Ascending aorta (tissue), 2 donors: ENCODE measurements at regions of chr20 and their contacts with region 1.

Region 1: DNA sequence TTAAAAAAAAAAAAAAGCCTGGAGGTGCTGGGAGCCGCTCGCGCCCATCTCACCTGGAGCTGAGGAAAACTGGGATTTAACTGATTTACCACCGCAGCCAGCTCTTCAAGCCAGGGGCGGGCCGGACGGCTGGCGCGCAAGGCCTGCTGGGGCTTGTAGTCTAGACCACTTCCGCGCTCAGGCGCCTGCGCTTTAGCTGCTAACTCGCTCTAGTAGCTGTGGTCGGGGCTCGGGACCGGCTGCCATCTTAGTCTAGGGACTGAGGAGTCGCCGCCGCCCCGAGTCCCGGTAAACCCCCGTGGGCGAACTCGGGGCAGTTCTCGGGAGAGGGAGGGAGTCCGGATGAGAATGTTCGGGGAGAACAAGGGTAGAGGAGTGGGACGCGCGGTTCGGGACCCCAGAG is at the start of gene ITCH:
- DNase-seq: peak; percentile 81 to 97
- H3K4me3 ChIP-seq: peak within 1 kb of the TSS; percentile 79 to 83
- H3K27ac ChIP-seq: peak within 1 kb of the TSS; percentile 92 to 94
- H3K4me1 ChIP-seq: peaks cover 6 to 38% of the 10 kb centered on the region in 2 donors
- H3K27me3 ChIP-seq: no peaks in the 10 kb centered on the region
- CTCF ChIP-seq: no peak
- total RNA-seq, gene ITCH: 42.8 TPM

Region 2: GRCh38 chr20:34302723-34303528 is 60.1 kb before region 1 on chr20 and contains the start of gene AHCY:
- intact Hi-C with region 1: loop called (anchors 2 kb)
- DNase-seq: peak; percentile 88 to 98
- H3K4me3 ChIP-seq: peak within 1 kb of the TSS; percentile 60 to 90
- H3K27ac ChIP-seq: peak within 1 kb of the TSS; percentile 94 to 95
- H3K4me1 ChIP-seq: peaks cover 0 to 6% of the 10 kb centered on the region in 2 donors
- H3K27me3 ChIP-seq: no peaks in the 10 kb centered on the region
- CTCF ChIP-seq: peak in 1 of 3 experiments; percentile 28
- total RNA-seq, gene AHCY: 93.8 TPM

Region 3: DNA sequence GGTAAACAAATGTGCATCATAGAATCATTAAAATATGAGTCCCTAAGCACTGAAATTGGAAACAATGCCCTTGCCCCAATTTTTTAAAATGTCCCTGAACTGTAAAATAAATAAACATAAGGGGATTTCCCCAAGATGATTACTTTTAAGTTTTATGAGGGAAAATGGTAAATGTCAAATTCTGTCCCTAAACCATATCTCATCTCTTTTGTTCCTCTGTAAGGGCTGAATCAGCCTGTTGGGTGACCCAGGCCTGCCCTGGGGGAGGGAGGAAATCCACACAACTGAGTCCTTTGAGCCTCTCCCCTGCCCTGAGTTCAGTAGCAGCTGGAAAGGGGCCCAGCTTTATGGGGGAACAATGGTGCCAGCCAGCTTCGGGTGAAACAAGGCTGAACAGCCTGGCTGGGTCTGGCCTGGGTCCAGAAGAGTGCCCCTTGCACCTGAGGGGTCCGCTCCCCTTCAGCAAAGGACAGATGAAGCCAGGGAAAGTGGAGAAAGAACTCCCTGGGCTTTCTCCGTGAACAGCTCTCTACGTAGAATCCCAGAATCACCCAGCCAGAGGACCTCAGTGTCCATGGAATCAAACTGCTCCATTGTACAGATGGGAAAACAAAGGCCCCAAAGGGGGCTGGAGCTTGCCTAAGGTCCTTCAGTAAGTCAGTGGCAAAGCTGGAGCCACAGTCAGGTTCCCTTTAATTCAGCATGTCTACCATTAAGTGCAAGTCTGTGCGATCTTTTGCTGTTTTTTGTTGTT is 28.2 kb before region 1 on chr20:
- intact Hi-C with region 1: no loop called
- DNase-seq: no peak
- H3K4me3 ChIP-seq: no peak overlapping the region
- H3K27ac ChIP-seq: no peak overlapping the region
- H3K4me1 ChIP-seq: no peaks in the 10 kb centered on the region
- H3K27me3 ChIP-seq: no peaks in the 10 kb centered on the region
- CTCF ChIP-seq: no peak

Region 4: DNA sequence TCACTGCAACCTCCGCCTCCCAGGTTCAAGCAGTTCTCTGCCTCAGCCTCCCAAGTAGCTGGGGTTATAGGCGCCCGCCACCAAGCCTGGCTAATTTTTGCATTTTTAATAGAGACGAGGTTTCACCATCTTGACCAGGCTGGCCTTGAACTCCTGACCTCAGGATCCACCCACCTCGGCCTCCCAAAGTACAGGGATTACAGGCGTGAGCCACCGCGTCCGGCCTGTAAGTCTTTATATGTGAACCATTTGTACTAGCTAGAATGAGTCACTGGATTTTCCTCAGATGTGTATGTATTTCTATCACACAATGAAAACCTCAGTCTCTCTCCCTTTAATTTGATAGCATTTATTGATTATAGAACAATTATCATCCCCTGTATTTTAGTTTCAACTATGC is 34.0 kb after region 1 on chr20:
- intact Hi-C with region 1: loop called (anchors 5 kb)
- DNase-seq: no peak
- H3K4me3 ChIP-seq: no peak overlapping the region
- H3K27ac ChIP-seq: no peak overlapping the region
- H3K4me1 ChIP-seq: peaks cover 0 to 14% of the 10 kb centered on the region in 2 donors
- H3K27me3 ChIP-seq: no peaks in the 10 kb centered on the region
- CTCF ChIP-seq: no peak

Region 5: DNA sequence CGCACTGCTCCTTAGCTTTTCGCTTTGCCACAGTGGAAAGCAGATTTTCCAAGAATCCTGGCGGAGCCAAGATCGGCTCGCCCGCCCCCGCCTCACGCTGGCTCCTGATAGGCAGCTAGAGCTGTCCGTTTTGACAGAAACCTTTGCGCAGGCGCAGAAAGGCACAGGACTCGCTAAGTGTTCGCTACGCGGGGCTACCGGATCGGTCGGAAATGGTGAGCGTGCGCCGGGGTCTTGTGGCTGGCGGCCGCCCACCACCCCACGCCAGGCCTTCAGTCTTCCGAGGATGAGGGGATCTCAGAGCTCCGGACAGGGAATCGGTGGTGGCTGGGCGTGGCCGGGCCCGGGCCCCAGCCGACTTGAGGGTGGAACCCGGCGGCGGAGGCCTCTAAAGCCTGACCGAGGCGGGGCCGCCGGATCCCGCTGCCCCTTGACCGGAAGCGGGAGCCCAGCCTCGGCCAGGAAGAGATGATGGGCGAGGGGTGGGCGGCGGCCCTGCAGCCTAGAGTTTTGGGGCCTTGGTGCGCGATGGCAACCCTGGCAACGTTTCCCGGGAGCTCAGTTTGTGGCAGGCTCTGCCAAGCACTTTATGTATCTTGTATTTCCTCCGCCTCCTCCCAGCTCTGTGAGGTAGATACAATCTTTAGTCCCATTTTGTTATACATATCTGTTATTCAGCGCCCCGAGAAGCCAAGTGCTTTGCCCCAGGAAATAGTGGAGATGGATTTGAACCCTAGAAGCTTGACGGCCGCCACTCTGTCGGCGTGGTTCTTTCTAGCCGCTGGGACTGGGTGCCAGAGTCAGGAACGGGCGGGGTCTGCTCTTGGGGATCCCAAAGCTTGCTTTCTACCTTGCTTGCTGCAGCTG is 153.4 kb after region 1 on chr20 and contains the start of gene DYNLRB1:
- intact Hi-C with region 1: loop called (anchors 5 kb)
- DNase-seq: peak; percentile 82 to 98
- H3K4me3 ChIP-seq: peak within 1 kb of the TSS; percentile 78 to 80
- H3K27ac ChIP-seq: peak within 1 kb of the TSS; percentile 89 to 97
- H3K4me1 ChIP-seq: peaks cover 0 to 27% of the 10 kb centered on the region in 2 donors
- H3K27me3 ChIP-seq: no peaks in the 10 kb centered on the region
- CTCF ChIP-seq: no peak
- total RNA-seq, gene DYNLRB1: 148 TPM

Region 6: GRCh38 chr20:34558320-34559218 is 195.5 kb after region 1 on chr20 and contains the start of gene MAP1LC3A:
- intact Hi-C with region 1: loop called (anchors 1 kb)
- DNase-seq: peak; percentile 91 to 98
- H3K4me3 ChIP-seq: peak within 1 kb of the TSS; percentile 92 to 95
- H3K27ac ChIP-seq: peak within 1 kb of the TSS; percentile 99 to 100
- H3K4me1 ChIP-seq: peaks cover 7% of the 10 kb centered on the region in 2 donors
- H3K27me3 ChIP-seq: no peaks in the 10 kb centered on the region
- CTCF ChIP-seq: no peak
- total RNA-seq, gene MAP1LC3A: 131 TPM

Region 7: GRCh38 chr20:34709044-34709830 is 346.2 kb after region 1 on chr20:
- intact Hi-C with region 1: no loop called
- DNase-seq: peak; percentile 18 to 92
- H3K4me3 ChIP-seq: peak overlapping the region; percentile 76 to 78
- H3K27ac ChIP-seq: peak overlapping the region; percentile 73 to 88
- H3K4me1 ChIP-seq: peaks cover 10 to 13% of the 10 kb centered on the region in 2 donors
- H3K27me3 ChIP-seq: no peaks in the 10 kb centered on the region
- CTCF ChIP-seq: no peak

Region 8: DNA sequence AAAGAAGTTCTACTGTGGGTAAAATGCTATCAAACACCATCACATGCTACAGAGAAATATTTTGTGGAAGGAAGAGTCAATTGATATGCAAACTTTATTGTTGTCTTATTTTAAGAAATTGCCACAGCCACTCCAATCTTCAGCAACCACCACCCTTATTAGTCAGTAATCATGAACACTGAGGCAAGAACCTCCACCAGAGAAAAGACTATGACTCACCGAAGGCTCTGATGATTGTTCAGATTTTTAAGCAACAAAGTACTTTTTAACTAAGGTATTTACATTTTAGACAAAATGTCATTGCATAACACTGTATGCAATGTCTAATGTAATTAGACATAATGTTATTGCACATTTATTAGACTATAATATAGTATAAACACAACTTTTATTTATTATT is 837.2 kb after region 1 on chr20:
- intact Hi-C with region 1: no loop called
- DNase-seq: no peak
- H3K4me3 ChIP-seq: no peak overlapping the region
- H3K27ac ChIP-seq: no peak overlapping the region
- H3K4me1 ChIP-seq: no peaks in the 10 kb centered on the region
- H3K27me3 ChIP-seq: no peaks in the 10 kb centered on the region
- CTCF ChIP-seq: no peak

Region 9: DNA sequence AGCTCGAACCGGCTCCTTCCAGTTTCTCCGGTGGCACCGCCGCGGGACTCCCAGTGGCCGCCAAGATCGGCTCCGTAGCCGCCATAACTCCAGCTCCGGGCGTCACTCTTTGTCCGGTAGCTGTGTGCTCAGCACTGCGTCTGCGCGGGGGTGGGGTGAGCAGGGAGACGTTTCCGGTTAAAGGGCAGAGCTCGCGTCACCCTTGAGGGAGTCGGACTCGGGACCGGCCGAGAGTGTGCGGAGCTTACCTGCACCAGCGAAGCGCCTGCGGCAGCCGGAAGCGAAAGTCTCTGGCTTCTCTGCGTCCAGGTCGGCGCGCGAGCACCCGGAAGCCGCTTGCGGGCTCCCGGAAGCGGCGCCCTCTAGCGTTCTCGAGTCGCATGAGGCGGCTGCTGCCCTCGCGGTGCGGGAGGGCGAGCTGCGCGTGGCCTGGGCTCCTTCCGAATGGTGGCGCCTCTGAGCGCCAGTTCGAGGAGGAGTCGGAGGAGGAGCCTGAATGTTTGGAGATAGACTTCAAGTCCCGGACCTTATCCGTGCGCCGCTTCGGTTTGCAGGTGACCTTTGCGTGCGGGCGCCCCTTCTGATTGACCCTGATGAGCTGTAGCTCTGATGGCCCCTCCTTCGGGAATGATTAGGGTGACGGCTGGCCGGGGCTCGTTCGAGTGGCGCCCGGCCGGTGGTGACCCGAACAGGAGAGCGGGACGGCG is 1591.3 kb after region 1 on chr20 and contains the start of gene SCAND1:
- intact Hi-C with region 1: loop called (anchors 10 kb)
- DNase-seq: peak; percentile 72 to 96
- H3K4me3 ChIP-seq: peak within 1 kb of the TSS; percentile 94
- H3K27ac ChIP-seq: peak within 1 kb of the TSS; percentile 98 to 99
- H3K4me1 ChIP-seq: peaks cover 0 to 16% of the 10 kb centered on the region in 2 donors
- H3K27me3 ChIP-seq: no peaks in the 10 kb centered on the region
- CTCF ChIP-seq: peak; percentile 96 to 98 (median 97)
- total RNA-seq, gene SCAND1: 146 TPM